ENCODE measurements at regions of chr6 and their contacts with region 1.

Region 1: DNA sequence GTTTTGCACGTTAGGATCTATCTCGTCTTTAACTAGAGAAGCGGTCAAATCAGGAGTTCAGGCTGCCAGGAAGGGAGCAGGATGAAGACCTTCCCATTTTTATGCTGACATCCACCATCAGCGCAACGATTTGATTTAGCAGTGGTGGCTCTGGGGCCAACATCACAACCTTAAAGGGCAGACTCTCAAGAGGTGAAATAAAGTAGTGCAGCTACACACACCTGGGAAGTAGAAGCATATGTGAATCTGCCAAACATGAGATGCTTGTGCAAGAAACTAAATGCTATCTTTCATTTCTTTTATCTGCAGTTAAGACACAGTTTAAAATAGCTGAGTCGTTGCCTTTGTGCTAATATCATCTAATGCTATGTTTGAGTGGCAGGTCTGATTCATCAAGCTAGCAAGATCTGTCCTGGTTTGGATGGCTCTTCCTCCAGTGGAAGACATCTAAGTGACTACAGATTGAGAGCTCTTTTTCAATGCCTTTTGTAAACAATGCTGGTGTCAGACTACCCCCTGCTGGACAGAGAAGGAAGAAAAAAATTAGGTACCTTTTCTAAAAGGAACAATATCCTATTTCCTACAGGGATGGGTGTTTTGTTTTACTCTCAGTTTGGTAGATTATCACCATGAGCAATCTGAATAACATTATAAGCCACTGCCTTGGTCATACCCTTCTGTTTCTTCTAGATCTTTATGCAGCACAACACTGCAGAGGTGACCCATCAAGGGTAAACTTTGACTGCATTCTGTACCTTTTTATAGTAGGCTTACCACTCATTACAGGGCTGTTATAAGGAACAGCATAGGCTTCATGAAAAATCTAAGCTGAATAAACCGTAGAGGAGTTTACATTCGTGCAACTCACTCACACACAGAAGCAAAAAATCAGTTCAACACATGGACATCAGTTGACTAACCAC is 171.6 kb upstream of the FBXL4 start:
- DNase-seq: peak; percentile 48
- H3K4me3 ChIP-seq: no peak overlapping the region
- H3K27ac ChIP-seq: no peak overlapping the region
- H3K4me1 ChIP-seq: peaks cover 7% of the 10 kb centered on the region
- H3K27me3 ChIP-seq: no peaks in the 10 kb centered on the region
- CTCF ChIP-seq: peak; percentile 58 to 66

Region 2: DNA sequence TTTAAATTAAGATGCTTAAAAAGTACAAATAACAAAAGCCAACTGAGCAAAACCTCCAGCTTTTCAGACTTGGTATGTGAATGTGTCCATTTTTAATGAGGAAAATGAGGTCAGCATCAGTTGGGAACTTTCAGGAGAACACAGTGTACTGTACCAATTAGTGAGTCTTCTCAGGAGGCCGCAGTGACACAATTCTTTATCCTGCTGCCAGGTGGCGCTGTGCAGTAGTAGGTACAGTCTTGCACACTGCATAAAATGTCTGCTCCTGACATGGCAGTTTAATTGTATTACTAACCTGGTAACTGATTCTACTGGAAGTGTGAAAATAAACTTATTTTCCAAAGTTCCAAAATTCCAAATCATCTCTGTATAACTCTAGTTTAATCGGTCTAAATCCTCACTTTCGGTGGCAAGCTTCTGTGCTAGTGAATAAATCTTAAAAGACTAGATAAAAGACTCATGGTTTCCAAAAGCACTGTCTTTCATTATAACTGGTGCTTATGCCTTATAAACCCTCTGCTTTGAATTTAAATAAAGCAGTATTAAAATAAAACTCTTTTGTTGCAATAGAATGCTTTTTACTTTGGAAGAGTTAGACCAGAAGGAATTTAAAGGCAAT is 1621.5 kb before region 1 on chr6:
- CTCF ChIA-PET with region 1: no interaction called
- dilution Hi-C with region 1: no loop called
- in situ Hi-C with region 1: no loop called
- intact Hi-C with region 1: loop called (anchors 2 kb)
- DNase-seq: peak; percentile 45
- H3K4me3 ChIP-seq: no peak overlapping the region
- H3K27ac ChIP-seq: no peak overlapping the region
- H3K4me1 ChIP-seq: no peaks in the 10 kb centered on the region
- H3K27me3 ChIP-seq: peaks cover 3% of the 10 kb centered on the region
- CTCF ChIP-seq: peak; percentile 91 to 97

Region 3: DNA sequence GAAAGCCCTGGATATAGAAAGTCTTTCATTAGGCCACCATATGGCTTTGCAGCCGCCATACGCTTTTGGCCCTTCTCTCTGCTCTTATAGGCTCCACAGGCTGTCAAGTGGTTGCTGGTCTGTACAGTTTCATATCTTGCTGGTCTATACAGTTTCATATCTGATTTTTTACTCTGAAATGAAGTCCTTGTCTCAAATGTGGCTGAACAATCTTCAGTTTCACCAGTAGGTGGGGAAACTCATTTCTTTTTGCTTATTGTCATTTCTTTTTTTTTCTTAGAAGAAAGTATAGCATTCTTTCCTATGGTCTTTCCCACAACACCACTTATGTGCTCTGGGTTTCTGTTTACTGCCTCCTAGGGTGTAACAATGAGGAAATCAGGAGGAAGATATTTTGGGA is 1064.9 kb before region 1 on chr6:
- CTCF ChIA-PET with region 1: no interaction called
- dilution Hi-C with region 1: no loop called
- in situ Hi-C with region 1: no loop called
- intact Hi-C with region 1: loop called (anchors 2 kb)
- DNase-seq: peak; percentile 6
- H3K4me3 ChIP-seq: no peak overlapping the region
- H3K27ac ChIP-seq: no peak overlapping the region
- H3K4me1 ChIP-seq: no peaks in the 10 kb centered on the region
- H3K27me3 ChIP-seq: no peaks in the 10 kb centered on the region
- CTCF ChIP-seq: peak; percentile 35 to 59

Region 4: GRCh38 chr6:98769544-98769943 is 349.8 kb before region 1 on chr6:
- CTCF ChIA-PET with region 1: interaction called, 6 read pairs
- dilution Hi-C with region 1: no loop called
- in situ Hi-C with region 1: no loop called
- intact Hi-C with region 1: loop called (anchors 2 kb)
- DNase-seq: peak; percentile 20
- H3K4me3 ChIP-seq: no peak overlapping the region
- H3K27ac ChIP-seq: no peak overlapping the region
- H3K4me1 ChIP-seq: no peaks in the 10 kb centered on the region
- H3K27me3 ChIP-seq: no peaks in the 10 kb centered on the region
- CTCF ChIP-seq: peak in 1 of 2 donors; percentile 52

Measured in mammary epithelial cell (primary cell).